ENCODE measurements at regions of chr20 and their contacts with region 1.

Region 1: GRCh38 chr20:13291157-13291556 is 70.1 kb downstream of the ISM1 start:
- DNase-seq: peak; percentile 40
- H3K4me3 ChIP-seq: no peak overlapping the region
- H3K27ac ChIP-seq: no peak overlapping the region
- H3K4me1 ChIP-seq: no peaks in the 10 kb centered on the region
- H3K27me3 ChIP-seq: no peaks in the 10 kb centered on the region
- CTCF ChIP-seq: no peak

Region 2: DNA sequence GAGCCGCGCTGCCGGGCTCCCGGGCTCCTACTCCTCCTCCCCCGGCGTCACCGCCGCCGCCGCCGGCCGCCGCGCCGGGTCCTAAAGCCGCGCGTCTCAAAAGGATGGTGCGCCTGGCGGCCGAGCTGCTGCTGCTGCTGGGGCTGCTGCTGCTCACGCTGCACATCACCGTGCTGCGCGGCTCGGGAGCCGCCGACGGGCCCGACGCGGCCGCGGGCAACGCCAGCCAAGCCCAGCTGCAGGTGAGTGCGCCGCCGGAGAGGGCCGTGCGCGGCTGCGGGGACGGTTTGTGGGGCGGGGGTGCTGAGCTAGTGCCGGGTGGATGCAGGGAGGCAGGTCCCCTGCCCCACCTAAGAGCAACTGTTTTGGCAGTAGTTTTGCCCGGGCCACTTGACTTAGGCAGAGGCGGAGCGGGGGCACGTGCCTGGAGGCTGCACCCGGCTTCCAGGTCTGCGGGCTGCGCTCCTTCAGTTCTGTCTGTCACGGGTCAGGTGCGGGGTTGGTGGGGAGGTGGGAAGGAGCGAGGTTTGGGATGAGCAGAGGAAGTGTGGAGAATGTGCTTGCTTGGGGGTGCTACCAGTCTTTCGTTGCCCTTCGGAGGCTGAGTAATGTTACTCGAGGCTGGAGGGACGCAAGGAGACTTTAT is 69.4 kb before region 1 on chr20:
- intact Hi-C with region 1: loop called (anchors 2 kb)
- DNase-seq: peak; percentile 45
- H3K4me3 ChIP-seq: peak overlapping the region; percentile 32
- H3K27ac ChIP-seq: no peak overlapping the region
- H3K4me1 ChIP-seq: peaks cover 7% of the 10 kb centered on the region
- H3K27me3 ChIP-seq: peaks cover 38% of the 10 kb centered on the region
- CTCF ChIP-seq: no peak